Activated B cell treated with CpG ODN at 0.5 μM for 24 hours (primary cell): ENCODE measurements at regions of chr1 and their contacts with region 1.

Region 1: GRCh38 chr1:234599617-234600417 is 10.2 kb downstream of the IRF2BP2 start:
- DNase-seq: peak; percentile 67
- ATAC-seq: peak; percentile 73
- H3K4me3 Mint-ChIP-seq: peak overlapping the region; percentile 86
- H3K27ac Mint-ChIP-seq: peak overlapping the region; percentile 89
- H3K4me1 Mint-ChIP-seq: peaks cover 66% of the 10 kb centered on the region
- H3K27me3 Mint-ChIP-seq: no peaks in the 10 kb centered on the region
- CTCF ChIP-seq: no peak

Region 2: GRCh38 chr1:234521807-234522195 is 78.0 kb before region 1 on chr1:
- CTCF ChIA-PET with region 1: interaction called, 3 read pairs
- POLR2A ChIA-PET with region 1: interaction called, 3 read pairs
- intact Hi-C with region 1: loop called (anchors 1 kb)
- DNase-seq: no peak
- ATAC-seq: no peak
- H3K4me3 Mint-ChIP-seq: no peak overlapping the region
- H3K27ac Mint-ChIP-seq: no peak overlapping the region
- H3K4me1 Mint-ChIP-seq: peaks cover 38% of the 10 kb centered on the region
- H3K27me3 Mint-ChIP-seq: no peaks in the 10 kb centered on the region
- CTCF ChIP-seq: no peak

Region 3: DNA sequence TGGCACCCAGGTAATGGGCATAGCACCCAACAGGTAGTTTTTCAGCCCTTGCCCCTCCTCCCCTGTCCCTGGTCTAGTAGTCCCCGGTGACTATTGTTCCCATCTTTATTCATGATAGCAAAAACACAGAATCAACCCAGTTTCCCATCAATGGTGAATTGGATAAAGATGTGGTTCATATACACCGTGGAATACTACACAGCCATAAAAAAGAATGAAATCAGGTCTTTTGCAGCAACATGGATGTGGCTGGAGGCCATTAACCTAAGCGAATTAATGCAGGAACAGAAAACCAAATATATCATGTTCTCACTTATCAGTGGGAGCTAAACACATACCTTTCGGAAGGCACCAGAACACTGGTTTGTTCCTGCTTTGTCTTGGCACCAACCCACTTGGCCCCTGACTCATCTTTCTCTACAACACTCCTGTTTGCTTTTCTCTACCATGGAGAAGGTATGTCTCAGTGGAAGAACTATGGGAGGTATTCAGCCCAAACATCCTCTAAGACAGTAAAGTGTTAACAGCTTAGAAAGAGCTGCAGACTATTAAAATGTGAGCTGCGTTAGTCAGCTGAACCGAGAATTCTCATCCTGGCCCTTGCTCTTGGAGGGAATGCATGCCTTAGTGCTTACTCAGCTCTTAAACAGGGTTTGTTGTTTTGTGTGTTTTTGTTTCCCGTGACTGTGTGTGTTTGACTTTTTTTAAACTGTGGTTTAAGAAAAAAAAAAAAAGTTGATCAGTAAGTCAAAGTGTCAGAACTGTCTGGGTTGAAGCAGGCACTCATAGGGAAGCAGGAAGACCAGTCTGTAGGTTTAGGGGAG is 325.8 kb after region 1 on chr1:
- CTCF ChIA-PET with region 1: no interaction called
- POLR2A ChIA-PET with region 1: interaction called, 5 read pairs
- intact Hi-C with region 1: loop called (anchors 5 kb)
- DNase-seq: no peak
- ATAC-seq: no peak
- H3K4me3 Mint-ChIP-seq: peak overlapping the region; percentile 78
- H3K27ac Mint-ChIP-seq: peak overlapping the region; percentile 78
- H3K4me1 Mint-ChIP-seq: peaks cover 30% of the 10 kb centered on the region
- H3K27me3 Mint-ChIP-seq: no peaks in the 10 kb centered on the region
- CTCF ChIP-seq: no peak

Region 4: DNA sequence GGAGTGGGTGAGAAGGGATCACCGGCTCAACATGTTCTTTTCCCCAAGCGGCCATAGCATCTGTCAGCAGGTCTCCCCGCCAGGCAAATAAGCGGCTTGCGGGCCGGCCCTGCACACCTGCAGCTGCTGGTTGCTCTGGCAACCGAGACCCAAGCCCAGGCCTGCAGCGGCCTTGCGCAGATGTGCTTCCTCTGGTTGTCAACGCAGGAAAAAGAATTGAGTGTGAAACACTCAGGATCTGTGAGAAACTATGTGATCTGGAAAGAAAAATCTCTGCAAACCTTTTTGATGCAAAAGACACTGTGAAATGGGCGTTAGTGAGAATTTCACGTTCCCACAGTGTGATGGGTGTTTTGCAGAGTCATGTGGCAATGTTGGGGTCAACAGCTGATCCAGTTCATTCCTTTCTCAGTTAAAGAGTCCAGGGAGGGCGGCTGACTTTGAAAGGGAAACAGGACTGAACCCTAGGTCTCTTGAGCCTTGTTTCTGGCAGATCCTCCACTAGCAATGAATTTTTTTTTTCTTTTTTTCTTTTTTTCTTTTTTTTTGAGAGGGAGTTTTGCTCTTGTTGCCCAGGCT is 500.5 kb after region 1 on chr1:
- CTCF ChIA-PET with region 1: no interaction called
- POLR2A ChIA-PET with region 1: no interaction called
- intact Hi-C with region 1: loop called (anchors 5 kb)
- DNase-seq: peak; percentile 55
- ATAC-seq: peak; percentile 69
- H3K4me3 Mint-ChIP-seq: peak overlapping the region; percentile 24
- H3K27ac Mint-ChIP-seq: peak overlapping the region; percentile 73
- H3K4me1 Mint-ChIP-seq: peaks cover 33% of the 10 kb centered on the region
- H3K27me3 Mint-ChIP-seq: peaks cover 3% of the 10 kb centered on the region
- CTCF ChIP-seq: no peak

Region 5: GRCh38 chr1:235128456-235129328 is 528.9 kb after region 1 on chr1 and contains the start of gene TOMM20:
- CTCF ChIA-PET with region 1: no interaction called
- POLR2A ChIA-PET with region 1: interaction called, 12 read pairs
- intact Hi-C with region 1: no loop called
- DNase-seq: peak; percentile 91
- ATAC-seq: peak; percentile 93
- H3K4me3 Mint-ChIP-seq: peak within 1 kb of the TSS; percentile 97
- H3K27ac Mint-ChIP-seq: peak within 1 kb of the TSS; percentile 93
- H3K4me1 Mint-ChIP-seq: peaks cover 41% of the 10 kb centered on the region
- H3K27me3 Mint-ChIP-seq: no peaks in the 10 kb centered on the region
- CTCF ChIP-seq: no peak
- total RNA-seq, gene TOMM20: 80.6 and 82.7 TPM in 2 replicates